ENCODE measurements at regions of chr10 and their contacts with region 1.

Region 1: DNA sequence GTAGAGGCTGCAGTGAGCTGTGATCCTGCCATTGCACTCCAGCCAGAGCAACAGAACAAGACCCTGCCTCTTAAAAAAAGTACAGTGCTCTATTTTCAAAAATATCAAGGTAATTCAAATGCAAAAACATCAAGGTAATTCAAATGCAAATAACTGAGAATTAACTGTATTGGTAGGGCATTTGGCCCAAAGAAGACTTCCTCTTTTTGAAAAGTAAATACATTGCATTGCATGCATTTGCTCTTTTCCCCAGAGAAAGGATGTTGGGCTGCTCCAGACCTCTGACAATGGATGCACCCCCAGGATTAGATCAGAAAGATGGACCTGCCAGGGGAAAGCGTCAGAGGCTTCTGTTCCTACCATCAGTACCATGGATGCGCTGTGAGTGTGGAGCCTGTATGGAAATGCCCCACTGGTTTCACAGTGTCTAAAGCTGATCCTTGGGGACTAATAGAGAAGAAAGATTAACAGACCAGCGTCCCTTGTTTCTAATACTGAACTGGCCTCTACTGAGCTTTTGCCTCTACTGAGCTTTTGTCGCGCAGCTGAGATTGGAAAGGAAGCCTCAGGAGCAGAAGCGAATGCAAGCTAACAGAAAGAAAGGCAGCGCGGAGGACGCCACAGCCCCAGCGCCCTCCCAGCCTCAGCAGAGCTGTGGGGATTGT is 93.5 kb upstream of the LYZL2 start:
- DNase-seq: no peak
- H3K4me3 ChIP-seq: no peak overlapping the region
- H3K27ac ChIP-seq: no peak overlapping the region
- H3K4me1 ChIP-seq: peaks cover 0 to 3% (median 0%) of the 10 kb centered on the region in 3 donors
- H3K27me3 ChIP-seq: no peaks in the 10 kb centered on the region
- CTCF ChIP-seq: no peak
- POLR2A ChIP-seq: no peak

Region 2: GRCh38 chr10:30456266-30456665 is 266.8 kb before region 1 on chr10:
- intact Hi-C with region 1: no loop called
- DNase-seq: no peak
- H3K4me3 ChIP-seq: no peak overlapping the region
- H3K27ac ChIP-seq: peak overlapping the region; percentile 65 to 88 (median 82)
- H3K4me1 ChIP-seq: peaks cover 21 to 65% (median 33%) of the 10 kb centered on the region in 3 donors
- H3K27me3 ChIP-seq: no peaks in the 10 kb centered on the region
- CTCF ChIP-seq: no peak
- POLR2A ChIP-seq: no peak

Region 3: GRCh38 chr10:30736685-30737232 is 13.7 kb after region 1 on chr10:
- intact Hi-C with region 1: no loop called
- DNase-seq: no peak
- H3K4me3 ChIP-seq: no peak overlapping the region
- H3K27ac ChIP-seq: peak overlapping the region in 1 of 4 donors; percentile 39
- H3K4me1 ChIP-seq: no peaks in the 10 kb centered on the region
- H3K27me3 ChIP-seq: no peaks in the 10 kb centered on the region
- CTCF ChIP-seq: no peak
- POLR2A ChIP-seq: no peak

Region 4: GRCh38 chr10:31808258-31809218 is 1085.5 kb after region 1 on chr10:
- intact Hi-C with region 1: loop called (anchors 10 kb)
- DNase-seq: no peak
- H3K4me3 ChIP-seq: peak overlapping the region in 3 of 4 donors; percentile 17 to 55 (median 29)
- H3K27ac ChIP-seq: peak overlapping the region; percentile 36 to 78 (median 68)
- H3K4me1 ChIP-seq: no peaks in the 10 kb centered on the region
- H3K27me3 ChIP-seq: no peaks in the 10 kb centered on the region
- CTCF ChIP-seq: peak in 5 of 6 experiments; percentile 45 to 67 (median 54)
- POLR2A ChIP-seq: no peak

Measured in esophagus squamous epithelium (tissue), 5 donors.